Vagina (tissue), 2 donors: ENCODE measurements at regions of chr5 and their contacts with region 1.

Region 1: GRCh38 chr5:160399402-160400353 is at the start of gene FAM200C:
- DNase-seq: peak in 1 of 2 donors; percentile 93
- H3K4me3 ChIP-seq: peak within 1 kb of the TSS; percentile 66
- H3K27ac ChIP-seq: peak within 1 kb of the TSS; percentile 79
- H3K4me1 ChIP-seq: peaks cover 21% of the 10 kb centered on the region
- H3K27me3 ChIP-seq: no peaks in the 10 kb centered on the region
- CTCF ChIP-seq: no peak
- POLR2A ChIP-seq: peak in 1 of 2 donors; percentile 96
- total RNA-seq, gene FAM200C: 2.5 TPM

Region 2: DNA sequence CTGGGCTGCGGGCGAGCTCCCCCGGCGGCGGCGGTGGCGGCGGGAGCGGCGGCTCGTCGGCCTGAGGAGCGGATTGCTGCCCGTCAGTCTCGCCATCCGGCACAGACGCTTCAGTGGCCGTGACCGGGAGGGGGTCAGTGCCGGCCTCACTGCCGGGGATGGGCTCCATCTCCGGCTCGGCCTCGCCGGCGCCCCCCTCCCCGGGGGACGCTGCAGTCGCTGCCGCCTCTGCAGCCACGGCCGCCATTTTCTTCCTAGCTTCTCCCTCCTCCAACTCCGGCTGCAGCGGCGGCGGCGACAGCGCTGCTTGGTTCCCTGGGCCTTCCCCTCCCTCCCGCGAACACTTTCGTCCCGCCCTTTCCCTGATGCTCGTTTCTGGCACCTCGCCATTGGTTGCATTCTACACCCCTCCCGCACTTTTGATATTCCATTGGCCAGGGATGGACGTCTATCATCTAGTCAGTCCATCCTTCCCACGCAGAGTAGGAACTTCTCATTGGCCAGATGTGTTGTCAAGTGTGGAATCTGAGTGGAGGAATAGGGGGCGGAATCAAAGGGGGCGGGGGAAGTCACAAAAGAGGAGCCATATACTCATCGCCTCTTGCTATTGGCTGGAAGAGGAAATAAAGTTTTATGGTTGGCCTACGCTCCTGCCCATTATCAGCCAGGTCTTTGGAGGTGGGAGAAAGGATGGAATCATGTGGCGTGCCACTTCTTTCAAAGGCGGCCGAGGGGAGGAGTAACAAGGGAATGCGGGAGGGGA is 280.4 kb before region 1 on chr5 and contains the start of gene PWWP2A:
- intact Hi-C with region 1: loop called (anchors 10 kb)
- DNase-seq: peak; percentile 100
- H3K4me3 ChIP-seq: peak within 1 kb of the TSS; percentile 66 to 92
- H3K27ac ChIP-seq: peak within 1 kb of the TSS; percentile 98
- H3K4me1 ChIP-seq: peaks cover 22% of the 10 kb centered on the region
- H3K27me3 ChIP-seq: no peaks in the 10 kb centered on the region
- CTCF ChIP-seq: no peak
- POLR2A ChIP-seq: peak in 1 of 2 donors; percentile 89
- total RNA-seq, gene PWWP2A: 19.9 TPM

Region 3: GRCh38 chr5:160357861-160358411 is 41.7 kb before region 1 on chr5:
- intact Hi-C with region 1: no loop called
- DNase-seq: no peak
- H3K4me3 ChIP-seq: no peak overlapping the region
- H3K27ac ChIP-seq: peak overlapping the region; percentile 71
- H3K4me1 ChIP-seq: peaks cover 25% of the 10 kb centered on the region
- H3K27me3 ChIP-seq: no peaks in the 10 kb centered on the region
- CTCF ChIP-seq: no peak
- POLR2A ChIP-seq: no peak

Region 4: GRCh38 chr5:161641444-161641843 is 1241.8 kb after region 1 on chr5:
- intact Hi-C with region 1: no loop called
- DNase-seq: no peak
- H3K4me3 ChIP-seq: no peak overlapping the region
- H3K27ac ChIP-seq: no peak overlapping the region
- H3K4me1 ChIP-seq: no peaks in the 10 kb centered on the region
- H3K27me3 ChIP-seq: no peaks in the 10 kb centered on the region
- CTCF ChIP-seq: no peak
- POLR2A ChIP-seq: no peak